Gastrocnemius medialis (tissue), 4 donors: ENCODE measurements at regions of chr14 and their contacts with region 1.

Region 1: GRCh38 chr14:94080471-94081289 is at the start of gene DDX24:
- DNase-seq: peak; percentile 96
- ATAC-seq: peak; percentile 97
- H3K4me3 ChIP-seq: peak within 1 kb of the TSS; percentile 84 to 95 (median 94)
- H3K27ac ChIP-seq: peak within 1 kb of the TSS; percentile 90 to 97 (median 95)
- H3K4me1 ChIP-seq: peaks cover 47 to 50% of the 10 kb centered on the region in 2 donors
- H3K27me3 ChIP-seq: no peaks in the 10 kb centered on the region
- CTCF ChIP-seq: no peak
- POLR2A ChIP-seq: peak; percentile 97 to 98
- total RNA-seq, gene DDX24: 106 to 200 (median 128) TPM

Region 2: GRCh38 chr14:94026173-94026888 is 54.3 kb before region 1 on chr14 and contains the start of gene OTUB2:
- in situ Hi-C with region 1: no loop called
- intact Hi-C with region 1: loop called (anchors 1 kb)
- DNase-seq: peak; percentile 95 to 98
- ATAC-seq: peak; percentile 100
- H3K4me3 ChIP-seq: peak within 1 kb of the TSS; percentile 60 to 70 (median 62)
- H3K27ac ChIP-seq: no peak within 1 kb of the TSS
- H3K4me1 ChIP-seq: peaks cover 0 to 6% of the 10 kb centered on the region in 2 donors
- H3K27me3 ChIP-seq: no peaks in the 10 kb centered on the region
- CTCF ChIP-seq: no peak
- POLR2A ChIP-seq: no peak
- total RNA-seq, gene OTUB2: 0.11 TPM in 1 of 4 donors, not detected in the others

Region 3: DNA sequence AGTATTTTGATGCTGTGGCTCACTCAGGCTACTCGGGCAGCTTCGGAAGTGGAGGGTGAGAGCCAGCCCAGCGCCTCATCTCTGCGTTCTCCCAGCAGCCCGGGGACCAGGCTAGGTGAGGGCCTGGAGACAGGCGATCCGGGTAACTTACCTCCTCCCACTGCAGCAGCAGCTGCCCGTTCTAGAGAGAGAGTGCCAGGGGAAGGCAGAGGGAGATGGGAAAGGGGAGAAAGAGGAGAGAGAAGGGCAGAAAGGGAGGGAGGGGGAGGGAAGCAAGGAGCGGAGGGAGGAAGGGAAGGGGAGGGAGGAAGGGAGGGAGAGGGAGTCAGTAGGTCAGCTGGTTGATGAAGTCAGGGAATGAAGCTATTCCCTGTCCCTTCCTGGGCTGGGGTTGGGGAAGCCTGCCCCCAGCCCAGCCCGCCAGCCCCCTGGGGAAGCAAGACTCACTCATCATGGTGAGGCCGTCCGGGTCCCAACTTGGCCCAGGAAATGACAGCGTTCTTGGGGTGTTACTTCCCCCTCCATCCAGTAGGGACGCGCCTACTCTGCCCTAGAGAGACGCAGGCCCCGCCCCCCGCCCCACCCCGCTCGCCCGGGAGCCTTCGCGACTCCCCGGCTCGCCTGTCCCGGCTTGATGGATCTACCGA is 48.6 kb after region 1 on chr14 and contains the start of gene IFI27L2:
- in situ Hi-C with region 1: no loop called
- intact Hi-C with region 1: loop called (anchors 5 kb)
- DNase-seq: peak; percentile 54 to 56
- ATAC-seq: peak; percentile 66 to 90
- H3K4me3 ChIP-seq: peak within 1 kb of the TSS; percentile 50 to 60 (median 54)
- H3K27ac ChIP-seq: peak within 1 kb of the TSS; percentile 53 to 76 (median 68)
- H3K4me1 ChIP-seq: peaks cover 8 to 11% of the 10 kb centered on the region in 2 donors
- H3K27me3 ChIP-seq: no peaks in the 10 kb centered on the region
- CTCF ChIP-seq: peak in 3 of 5 experiments; percentile 10 to 45 (median 26)
- POLR2A ChIP-seq: peak; percentile 14 to 25
- total RNA-seq, gene IFI27L2: 1.1 to 9.1 (median 3.3) TPM

Region 4: GRCh38 chr14:94173885-94174603 is 93.4 kb after region 1 on chr14 and contains the start of gene PPP4R4:
- in situ Hi-C with region 1: no loop called
- intact Hi-C with region 1: loop called (anchors 2 kb)
- DNase-seq: peak; percentile 40 to 61
- ATAC-seq: peak; percentile 81 to 89
- H3K4me3 ChIP-seq: peak within 1 kb of the TSS; percentile 59 to 69 (median 64)
- H3K27ac ChIP-seq: peak within 1 kb of the TSS; percentile 53 to 75 (median 68)
- H3K4me1 ChIP-seq: peaks cover 13% of the 10 kb centered on the region in 2 donors
- H3K27me3 ChIP-seq: peaks cover 24 to 36% (median 34%) of the 10 kb centered on the region in 3 donors
- CTCF ChIP-seq: no peak
- POLR2A ChIP-seq: no peak
- total RNA-seq, gene PPP4R4: 0.13 TPM in 1 of 4 donors, not detected in the others